ENCODE measurements at regions of chr19 and their contacts with region 1.

Region 1: GRCh38 chr19:1987197-1988187 is 28.0 kb downstream of the BTBD2 start:
- DNase-seq: peak in 1 of 14 experiments; percentile 33
- ATAC-seq: no peak
- H3K4me3 ChIP-seq: no peak overlapping the region
- H3K4me3 Mint-ChIP-seq: no peak overlapping the region
- H3K27ac ChIP-seq: no peak overlapping the region
- H3K27ac Mint-ChIP-seq: no peak overlapping the region
- H3K4me1 ChIP-seq: no peaks in the 10 kb centered on the region
- H3K4me1 Mint-ChIP-seq: no peaks in the 10 kb centered on the region
- H3K27me3 ChIP-seq: no peaks in the 10 kb centered on the region
- H3K27me3 Mint-ChIP-seq: no peaks in the 10 kb centered on the region
- CTCF ChIP-seq: no peak

Region 2: DNA sequence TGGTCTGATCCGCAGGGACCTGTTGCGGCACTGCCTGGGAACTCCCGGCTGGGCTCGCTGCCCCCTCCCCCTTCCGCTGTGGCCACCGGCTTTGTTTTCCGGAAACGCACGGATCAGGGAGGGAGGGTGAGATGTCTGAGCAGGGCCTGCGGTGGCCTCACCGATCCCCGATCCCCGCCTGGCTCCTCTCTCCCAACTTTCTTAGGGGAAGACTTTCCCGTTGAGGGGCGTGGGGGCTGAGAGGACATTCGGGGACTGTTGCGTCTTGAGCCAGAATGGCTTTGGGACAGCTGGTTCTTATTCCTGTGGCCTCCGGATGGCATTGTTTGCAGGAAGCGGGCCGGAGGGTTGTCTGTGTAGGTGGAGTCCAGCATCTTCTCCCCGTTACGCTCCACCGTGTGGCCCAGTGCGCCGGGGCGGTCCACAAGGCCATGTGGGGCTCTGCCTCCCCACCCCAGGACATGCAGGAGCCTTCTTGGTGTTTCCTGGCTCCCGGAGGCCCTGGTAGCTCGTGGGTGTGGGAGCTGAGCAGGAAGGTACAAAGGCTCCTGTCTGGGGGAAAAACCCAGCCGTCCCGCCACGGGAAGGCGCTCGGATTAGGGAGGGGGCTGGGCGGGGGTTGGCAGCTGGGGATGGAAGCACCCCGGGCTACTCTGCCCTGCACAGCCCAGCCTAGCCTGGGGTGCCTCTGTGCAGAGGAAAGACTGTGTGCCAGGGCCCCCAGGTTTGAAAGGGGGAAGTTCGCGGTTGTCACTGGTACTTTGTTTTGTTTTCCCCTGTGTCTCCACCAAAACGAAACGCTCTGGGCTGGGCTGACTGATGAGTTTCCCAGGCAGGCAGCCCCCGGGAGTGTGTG is 45.2 kb before region 1 on chr19:
- CTCF ChIA-PET with region 1: no interaction called
- POLR2A ChIA-PET with region 1: interaction called, 4 read pairs
- intact Hi-C with region 1: loop called in 1 of 2 experiments (anchors 5 kb)
- DNase-seq: peak; percentile 51 to 93 (median 76)
- ATAC-seq: peak; percentile 50
- H3K4me3 ChIP-seq: peak overlapping the region; percentile 97
- H3K4me3 Mint-ChIP-seq: peak overlapping the region; percentile 96
- H3K27ac ChIP-seq: peak overlapping the region; percentile 94 to 98
- H3K27ac Mint-ChIP-seq: peak overlapping the region; percentile 96
- H3K4me1 ChIP-seq: peaks cover 58% of the 10 kb centered on the region
- H3K4me1 Mint-ChIP-seq: peaks cover 27% of the 10 kb centered on the region
- H3K27me3 ChIP-seq: no peaks in the 10 kb centered on the region
- H3K27me3 Mint-ChIP-seq: peaks cover 5% of the 10 kb centered on the region
- CTCF ChIP-seq: no peak

Measured in CD4-positive, alpha-beta T cell (primary cell).